ENCODE measurements at regions of chr15 and their contacts with region 1.

Region 1: DNA sequence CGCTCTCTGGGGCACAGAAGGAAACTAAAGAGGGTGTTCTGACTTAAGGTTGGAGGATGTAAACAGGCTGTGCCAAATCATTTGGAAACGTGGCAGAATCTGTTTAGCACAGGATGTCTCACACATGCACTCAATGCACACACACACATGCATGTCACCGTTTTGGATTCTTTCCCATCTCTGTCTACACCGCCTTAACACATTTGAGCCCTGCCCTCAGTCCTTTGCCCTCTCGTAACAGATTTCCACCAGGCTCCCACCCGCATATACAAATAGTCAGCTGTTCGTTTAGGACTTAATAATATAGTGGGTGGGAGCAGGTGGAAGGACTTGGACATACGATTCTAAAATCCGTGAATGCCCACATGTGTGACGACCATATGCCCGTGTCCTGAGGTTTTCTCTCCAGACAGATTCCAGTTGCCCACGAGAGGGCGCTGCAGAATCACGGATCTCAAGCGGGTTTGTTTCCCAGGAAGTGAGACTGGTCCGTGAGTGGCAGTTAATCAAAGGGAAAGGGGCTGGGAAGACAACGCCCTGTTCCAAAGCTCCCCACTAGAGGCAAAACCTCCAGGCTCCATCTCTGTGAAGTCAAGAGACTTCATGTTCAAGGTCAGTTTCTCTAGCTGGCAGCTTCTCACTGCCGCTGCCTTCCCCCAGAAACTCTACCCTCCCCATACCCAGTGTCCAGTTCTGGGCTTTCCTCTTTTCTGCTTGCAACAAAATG is 44.5 kb downstream of the NOX5 start:
- DNase-seq: peak; percentile 83
- ATAC-seq: peak; percentile 87
- H3K4me3 ChIP-seq: peak overlapping the region in 1 of 3 experiments; percentile 39; a peak in 2 of 6 replicates
- H3K27ac ChIP-seq: no peak overlapping the region
- H3K4me1 ChIP-seq: peaks cover 34% of the 10 kb centered on the region
- H3K27me3 ChIP-seq: peaks cover 0 to 20% of the 10 kb centered on the region in 2 experiments; a peak in 2 of 5 replicates
- CTCF ChIP-seq: peak; percentile 96
- EP300 ChIP-seq: no peak
- POLR2A ChIP-seq: no peak
- RAD21 ChIP-seq: peak; percentile 91

Region 2: GRCh38 chr15:69225355-69226025 is 166.5 kb after region 1 on chr15:
- CTCF ChIA-PET with region 1: interaction called, 33 read pairs
- POLR2A ChIA-PET with region 1: no interaction called
- in situ Hi-C with region 1: loop called (anchors 5 kb)
- intact Hi-C with region 1: loop called (anchors 1 kb)
- DNase-seq: peak; percentile 49
- ATAC-seq: peak; percentile 14; the same call in 1 of the 3 replicates
- H3K4me3 ChIP-seq: peak overlapping the region in 1 of 3 experiments; percentile 38; a peak in 1 of 6 replicates
- H3K27ac ChIP-seq: peak overlapping the region; percentile 74
- H3K4me1 ChIP-seq: peaks cover 52% of the 10 kb centered on the region
- H3K27me3 ChIP-seq: no peaks in the 10 kb centered on the region
- CTCF ChIP-seq: peak; percentile 71
- EP300 ChIP-seq: no peak
- POLR2A ChIP-seq: no peak
- RAD21 ChIP-seq: peak; percentile 66

Region 3: DNA sequence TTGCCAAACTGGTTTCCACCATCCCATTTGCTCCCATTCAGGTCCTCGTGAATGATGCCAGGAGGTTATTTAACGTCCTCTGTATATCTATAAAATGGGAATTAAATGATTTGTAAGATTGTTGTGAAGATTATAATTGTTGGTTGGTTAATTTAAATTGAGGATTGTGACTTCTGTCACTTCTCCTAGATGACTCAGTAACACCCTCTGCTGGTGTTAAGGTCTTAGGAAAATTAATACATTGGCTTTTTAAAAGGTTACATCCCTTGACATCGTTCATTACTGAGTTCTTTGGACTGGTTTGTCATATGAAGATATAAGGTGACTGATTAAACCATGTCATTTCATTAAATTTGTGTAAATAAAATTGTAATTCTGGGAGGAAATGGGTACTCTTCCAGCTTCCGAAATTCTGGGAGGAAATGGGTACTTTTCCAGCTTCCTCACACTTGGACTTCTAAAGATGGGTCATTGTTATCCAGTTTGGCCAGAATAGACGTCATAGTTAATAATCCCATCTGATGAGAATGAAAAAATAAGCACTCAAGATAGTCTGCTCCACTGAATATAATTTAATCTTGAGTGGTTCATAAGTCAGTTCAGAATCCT is 206.5 kb after region 1 on chr15:
- CTCF ChIA-PET with region 1: interaction called, 26 read pairs
- POLR2A ChIA-PET with region 1: no interaction called
- in situ Hi-C with region 1: loop called (anchors 5 kb)
- intact Hi-C with region 1: loop called (anchors 1 kb)
- DNase-seq: peak; percentile 47
- ATAC-seq: no peak
- H3K4me3 ChIP-seq: no peak overlapping the region
- H3K27ac ChIP-seq: no peak overlapping the region
- H3K4me1 ChIP-seq: no peaks in the 10 kb centered on the region
- H3K27me3 ChIP-seq: no peaks in the 10 kb centered on the region
- CTCF ChIP-seq: peak; percentile 46
- EP300 ChIP-seq: no peak
- POLR2A ChIP-seq: no peak
- RAD21 ChIP-seq: 0 out of 2 replicates have a peak, but pooled peaks have one; percentile 21

Region 4: GRCh38 chr15:69394556-69395282 is 335.7 kb after region 1 on chr15:
- CTCF ChIA-PET with region 1: interaction called, 34 read pairs
- POLR2A ChIA-PET with region 1: no interaction called
- in situ Hi-C with region 1: loop called (anchors 5 kb)
- intact Hi-C with region 1: loop called (anchors 1 kb)
- DNase-seq: peak; percentile 31
- ATAC-seq: peak; percentile 92
- H3K4me3 ChIP-seq: no peak overlapping the region; a peak in 1 of 6 replicates
- H3K27ac ChIP-seq: no peak overlapping the region
- H3K4me1 ChIP-seq: peaks cover 26% of the 10 kb centered on the region
- H3K27me3 ChIP-seq: peaks cover 2 to 22% of the 10 kb centered on the region in 2 experiments; a peak in 4 of 5 replicates
- CTCF ChIP-seq: peak; percentile 94
- EP300 ChIP-seq: no peak
- POLR2A ChIP-seq: no peak
- RAD21 ChIP-seq: peak; percentile 85

Region 5: GRCh38 chr15:69573815-69574475 is 515.0 kb after region 1 on chr15:
- CTCF ChIA-PET with region 1: no interaction called
- POLR2A ChIA-PET with region 1: no interaction called
- in situ Hi-C with region 1: no loop called
- intact Hi-C with region 1: no loop called
- DNase-seq: no peak
- ATAC-seq: no peak
- H3K4me3 ChIP-seq: no peak overlapping the region
- H3K27ac ChIP-seq: no peak overlapping the region
- H3K4me1 ChIP-seq: no peaks in the 10 kb centered on the region
- H3K27me3 ChIP-seq: peaks cover 16 to 93% of the 10 kb centered on the region in 2 experiments; a peak in 4 of 5 replicates
- CTCF ChIP-seq: no peak
- EP300 ChIP-seq: no peak
- POLR2A ChIP-seq: no peak
- RAD21 ChIP-seq: no peak

Measured in HepG2 (cell line).